Caco-2 (cell line): ENCODE measurements at regions of chr4 and their contacts with region 1.

Region 1: DNA sequence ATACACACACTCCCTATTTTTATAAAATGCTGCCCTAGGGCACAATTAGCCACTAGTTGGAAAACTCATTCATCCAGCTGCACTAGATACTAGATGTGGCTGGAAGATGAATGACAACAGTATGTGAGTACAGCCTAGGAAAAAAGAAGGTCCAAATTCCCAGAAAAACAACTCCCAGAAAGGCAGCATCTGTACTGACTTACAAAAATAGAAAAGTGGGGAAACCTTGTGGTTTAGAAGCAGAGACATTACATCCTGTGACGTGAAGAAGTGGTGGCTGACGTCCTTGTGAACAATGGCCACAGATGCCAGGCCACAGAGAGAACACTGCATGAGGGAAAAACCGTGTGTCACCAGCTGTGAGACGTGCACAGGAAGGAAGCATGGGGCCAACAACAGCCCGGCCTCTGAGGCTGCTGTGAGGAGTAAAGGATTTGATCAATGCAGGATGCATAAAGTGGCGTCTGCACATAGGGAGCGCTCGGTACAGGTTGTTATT is 81.2 kb downstream of the SPRY1 start:
- DNase-seq: no peak
- H3K4me3 ChIP-seq: no peak overlapping the region
- H3K4me3 Mint-ChIP-seq: peak overlapping the region; percentile 70
- H3K27ac Mint-ChIP-seq: peak overlapping the region; percentile 97
- H3K4me1 ChIP-seq: peaks cover 48% of the 10 kb centered on the region
- H3K4me1 Mint-ChIP-seq: peaks cover 50% of the 10 kb centered on the region
- H3K27me3 ChIP-seq: no peaks in the 10 kb centered on the region
- H3K27me3 Mint-ChIP-seq: no peaks in the 10 kb centered on the region
- CTCF ChIP-seq: no peak

Region 2: DNA sequence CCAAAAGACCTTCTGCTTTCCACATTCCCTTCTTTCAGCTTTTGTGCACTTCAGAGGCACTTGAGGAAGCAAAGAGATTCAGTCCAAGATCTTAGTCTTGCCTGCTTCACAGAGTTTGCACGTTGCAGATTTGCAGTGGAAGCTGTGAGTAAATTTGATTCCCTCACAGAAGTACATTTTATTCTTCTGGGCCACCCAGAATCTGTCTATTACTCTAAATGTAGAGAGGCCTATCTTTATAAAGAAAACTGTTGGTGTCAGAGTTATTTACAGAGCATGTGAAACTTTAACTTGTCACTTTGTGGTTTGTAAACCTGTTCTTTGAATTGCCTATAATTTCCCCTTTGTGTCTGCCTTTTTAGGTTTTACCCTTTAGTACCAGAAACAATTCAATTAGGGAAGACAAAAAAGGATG is 65.7 kb before region 1 on chr4:
- CTCF ChIA-PET with region 1: no interaction called
- POLR2A ChIA-PET with region 1: no interaction called
- intact Hi-C with region 1: no loop called
- DNase-seq: no peak
- H3K4me3 ChIP-seq: no peak overlapping the region
- H3K4me3 Mint-ChIP-seq: no peak overlapping the region
- H3K27ac Mint-ChIP-seq: no peak overlapping the region
- H3K4me1 ChIP-seq: peaks cover 54% of the 10 kb centered on the region
- H3K4me1 Mint-ChIP-seq: peaks cover 27% of the 10 kb centered on the region
- H3K27me3 ChIP-seq: no peaks in the 10 kb centered on the region
- H3K27me3 Mint-ChIP-seq: no peaks in the 10 kb centered on the region
- CTCF ChIP-seq: no peak

Region 3: GRCh38 chr4:123430031-123430430 is 47.7 kb before region 1 on chr4:
- CTCF ChIA-PET with region 1: no interaction called
- POLR2A ChIA-PET with region 1: no interaction called
- intact Hi-C with region 1: no loop called
- DNase-seq: no peak
- H3K4me3 ChIP-seq: no peak overlapping the region
- H3K4me3 Mint-ChIP-seq: no peak overlapping the region
- H3K27ac Mint-ChIP-seq: peak overlapping the region; percentile 61
- H3K4me1 ChIP-seq: peaks cover 13% of the 10 kb centered on the region
- H3K4me1 Mint-ChIP-seq: peaks cover 10% of the 10 kb centered on the region
- H3K27me3 ChIP-seq: no peaks in the 10 kb centered on the region
- H3K27me3 Mint-ChIP-seq: no peaks in the 10 kb centered on the region
- CTCF ChIP-seq: no peak

Region 4: DNA sequence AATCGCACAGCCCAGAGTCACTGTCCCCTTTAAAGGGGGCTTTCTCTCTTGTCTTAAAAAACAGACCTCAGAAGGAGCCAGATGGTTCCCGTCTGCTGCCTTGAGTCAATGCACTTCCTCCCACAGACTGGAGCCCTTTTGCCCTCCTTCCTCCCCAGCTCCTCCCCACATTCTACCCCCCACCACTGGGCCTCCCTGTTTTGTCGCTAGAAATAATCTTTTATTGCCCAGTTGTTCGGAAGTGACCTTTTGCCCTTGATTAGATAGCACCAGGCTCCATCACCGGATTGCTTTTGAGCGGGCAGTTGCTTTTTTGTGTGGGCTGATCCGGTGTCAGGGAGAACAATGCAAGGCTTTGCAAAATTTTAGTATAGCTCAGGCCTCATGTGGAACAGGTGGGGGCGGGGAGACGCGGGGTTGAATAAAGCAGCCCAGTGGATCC is 33.4 kb before region 1 on chr4:
- CTCF ChIA-PET with region 1: no interaction called
- POLR2A ChIA-PET with region 1: no interaction called
- intact Hi-C with region 1: loop called (anchors 1 kb)
- DNase-seq: peak; percentile 82 to 90
- H3K4me3 ChIP-seq: peak overlapping the region; percentile 10; the same call in 1 of the 2 replicates
- H3K4me3 Mint-ChIP-seq: peak overlapping the region; percentile 49
- H3K27ac Mint-ChIP-seq: peak overlapping the region; percentile 40
- H3K4me1 ChIP-seq: peaks cover 19% of the 10 kb centered on the region
- H3K4me1 Mint-ChIP-seq: peaks cover 3% of the 10 kb centered on the region
- H3K27me3 ChIP-seq: no peaks in the 10 kb centered on the region
- H3K27me3 Mint-ChIP-seq: no peaks in the 10 kb centered on the region
- CTCF ChIP-seq: no peak

Region 5: GRCh38 chr4:123547216-123548165 is 69.7 kb after region 1 on chr4:
- CTCF ChIA-PET with region 1: interaction called, 3 read pairs
- POLR2A ChIA-PET with region 1: interaction called, 6 read pairs
- intact Hi-C with region 1: loop called (anchors 1 kb)
- DNase-seq: peak; percentile 85 to 90
- H3K4me3 ChIP-seq: peak overlapping the region; percentile 31
- H3K4me3 Mint-ChIP-seq: peak overlapping the region; percentile 85
- H3K27ac Mint-ChIP-seq: peak overlapping the region; percentile 94
- H3K4me1 ChIP-seq: peaks cover 33% of the 10 kb centered on the region
- H3K4me1 Mint-ChIP-seq: peaks cover 23% of the 10 kb centered on the region
- H3K27me3 ChIP-seq: no peaks in the 10 kb centered on the region
- H3K27me3 Mint-ChIP-seq: no peaks in the 10 kb centered on the region
- CTCF ChIP-seq: no peak

Region 6: GRCh38 chr4:123564758-123565346 is 87.1 kb after region 1 on chr4:
- CTCF ChIA-PET with region 1: no interaction called
- POLR2A ChIA-PET with region 1: no interaction called
- intact Hi-C with region 1: loop called (anchors 2 kb)
- DNase-seq: peak; percentile 80 to 81
- H3K4me3 ChIP-seq: no peak overlapping the region
- H3K4me3 Mint-ChIP-seq: no peak overlapping the region
- H3K27ac Mint-ChIP-seq: no peak overlapping the region
- H3K4me1 ChIP-seq: peaks cover 20% of the 10 kb centered on the region
- H3K4me1 Mint-ChIP-seq: peaks cover 22% of the 10 kb centered on the region
- H3K27me3 ChIP-seq: no peaks in the 10 kb centered on the region
- H3K27me3 Mint-ChIP-seq: no peaks in the 10 kb centered on the region
- CTCF ChIP-seq: peak; percentile 88 to 99

Region 7: DNA sequence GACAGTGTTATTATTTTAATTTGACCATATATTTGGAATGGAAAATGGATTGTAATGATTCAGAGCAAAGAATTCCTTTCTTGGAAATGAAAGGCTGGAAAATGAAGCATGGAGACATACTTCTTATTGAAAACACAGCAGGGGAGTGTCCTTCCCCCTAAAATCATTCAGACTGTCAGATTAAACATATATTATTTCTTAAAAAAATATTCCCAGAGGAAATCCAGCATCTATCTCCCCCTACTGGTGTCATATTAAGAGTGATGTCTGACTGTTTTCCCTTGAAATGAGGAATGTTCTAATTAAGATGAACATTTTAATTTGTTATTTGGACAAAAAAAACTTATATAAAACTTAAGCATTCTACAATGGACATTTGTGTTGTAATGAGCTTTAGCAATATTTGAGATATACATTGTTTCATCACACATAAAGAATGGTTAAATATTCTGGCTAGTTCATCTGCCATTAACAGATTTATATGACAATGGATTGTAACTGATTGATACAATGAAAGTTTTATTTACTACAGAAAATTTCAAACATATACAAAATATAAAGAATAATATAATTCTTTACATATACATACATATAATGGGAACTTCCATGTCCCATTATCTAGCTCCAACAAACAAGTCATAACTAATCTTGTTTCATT is 183.4 kb after region 1 on chr4:
- CTCF ChIA-PET with region 1: no interaction called
- POLR2A ChIA-PET with region 1: no interaction called
- intact Hi-C with region 1: loop called (anchors 1 kb)
- DNase-seq: no peak
- H3K4me3 ChIP-seq: no peak overlapping the region
- H3K4me3 Mint-ChIP-seq: no peak overlapping the region
- H3K27ac Mint-ChIP-seq: no peak overlapping the region
- H3K4me1 ChIP-seq: peaks cover 6% of the 10 kb centered on the region; the same call in 1 of the 2 replicates
- H3K4me1 Mint-ChIP-seq: peaks cover 20% of the 10 kb centered on the region
- H3K27me3 ChIP-seq: no peaks in the 10 kb centered on the region
- H3K27me3 Mint-ChIP-seq: no peaks in the 10 kb centered on the region
- CTCF ChIP-seq: peak; percentile 41 to 54

Region 8: DNA sequence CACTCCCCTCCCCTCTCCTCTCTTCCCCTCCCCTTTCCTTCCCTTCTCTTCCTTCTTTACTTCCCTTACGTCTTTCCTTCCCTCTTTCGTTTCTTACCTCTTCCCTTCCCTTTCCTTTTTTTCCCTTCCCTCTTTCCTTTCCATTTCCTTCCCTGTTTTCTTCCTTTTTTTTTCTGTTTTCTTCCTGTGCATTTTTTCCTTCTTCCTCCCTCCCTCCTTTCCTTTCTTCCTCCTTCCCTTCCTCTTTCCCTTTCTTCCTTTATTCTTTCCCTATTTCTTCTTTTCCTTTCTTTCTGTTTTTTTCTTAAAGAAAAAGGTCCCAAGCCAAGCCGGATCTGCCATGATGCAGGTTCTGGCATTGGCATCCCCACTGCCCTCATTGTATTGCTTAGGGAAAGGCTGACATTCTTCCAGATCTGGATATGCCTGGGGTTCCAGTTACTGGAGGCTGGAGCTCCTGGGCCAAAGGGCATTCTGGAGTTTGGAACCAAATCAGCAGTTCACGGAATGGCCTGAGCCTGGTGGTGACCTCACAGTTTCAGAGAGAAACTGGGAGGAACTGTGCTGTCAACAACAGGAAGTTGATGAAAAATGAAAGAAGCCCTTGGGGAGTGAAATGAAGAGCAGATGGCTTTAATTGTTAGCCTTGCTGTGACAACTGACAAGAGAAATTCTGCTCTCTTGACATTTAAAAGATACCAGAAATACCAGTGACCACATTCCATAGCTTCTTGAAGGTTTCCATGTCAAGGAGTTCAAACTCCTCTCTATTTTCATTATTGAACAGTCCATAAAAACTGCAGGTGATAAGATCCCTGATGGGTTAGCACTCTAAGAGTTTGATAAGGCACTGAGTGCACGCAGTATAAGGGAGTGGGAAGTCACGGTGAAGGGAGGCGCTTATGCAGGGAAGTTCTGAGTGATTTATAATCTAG is 540.9 kb after region 1 on chr4:
- CTCF ChIA-PET with region 1: no interaction called
- POLR2A ChIA-PET with region 1: no interaction called
- intact Hi-C with region 1: loop called (anchors 2 kb)
- DNase-seq: peak; percentile 69 to 82
- H3K4me3 ChIP-seq: no peak overlapping the region
- H3K4me3 Mint-ChIP-seq: peak overlapping the region; percentile 22
- H3K27ac Mint-ChIP-seq: peak overlapping the region; percentile 88
- H3K4me1 ChIP-seq: peaks cover 18% of the 10 kb centered on the region
- H3K4me1 Mint-ChIP-seq: peaks cover 25% of the 10 kb centered on the region
- H3K27me3 ChIP-seq: no peaks in the 10 kb centered on the region
- H3K27me3 Mint-ChIP-seq: no peaks in the 10 kb centered on the region
- CTCF ChIP-seq: no peak